Posterior vena cava (tissue), 2 donors: ENCODE measurements at regions of chr1 and their contacts with region 1.

Region 1: DNA sequence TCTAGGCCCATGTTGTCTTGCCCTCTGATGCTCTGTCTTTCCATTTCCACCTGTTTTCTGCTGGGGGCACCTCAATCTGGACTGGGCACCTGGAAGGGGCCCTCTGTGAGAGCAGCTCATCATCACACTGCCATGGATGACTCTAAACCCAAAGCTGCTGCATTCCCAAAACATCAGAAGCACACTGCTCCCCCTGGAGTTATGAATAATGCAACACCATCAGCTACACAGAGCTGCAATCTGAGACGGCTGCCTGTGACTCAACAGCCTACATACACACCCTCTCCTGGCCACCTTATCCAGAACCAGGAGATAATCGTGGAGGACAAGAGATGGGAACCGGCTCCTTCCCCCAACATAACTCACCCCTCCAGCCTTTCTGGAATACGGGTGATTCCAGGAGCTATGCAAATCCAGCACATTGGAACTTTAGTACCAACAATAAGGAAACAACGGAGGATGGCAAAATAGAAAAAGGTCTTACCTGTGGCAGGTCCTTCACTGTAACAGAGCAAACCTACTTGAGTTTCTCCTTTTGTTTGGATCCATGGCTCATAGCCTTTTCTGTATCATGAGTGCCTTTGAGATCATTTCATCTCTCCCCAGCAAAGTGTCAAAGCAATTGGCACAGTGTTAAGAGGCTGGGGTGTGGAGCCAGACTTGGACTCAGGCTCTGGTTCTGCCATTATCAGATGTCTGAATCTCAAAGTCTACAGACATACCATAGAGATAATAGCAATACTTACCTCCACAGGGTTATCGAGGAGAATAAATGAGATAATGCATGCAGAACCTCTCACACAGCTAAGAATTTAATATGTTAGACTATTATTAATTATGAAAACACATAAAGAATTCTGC is 29.3 kb downstream of the AK2 start:
- DNase-seq: peak; percentile 78

Region 2: DNA sequence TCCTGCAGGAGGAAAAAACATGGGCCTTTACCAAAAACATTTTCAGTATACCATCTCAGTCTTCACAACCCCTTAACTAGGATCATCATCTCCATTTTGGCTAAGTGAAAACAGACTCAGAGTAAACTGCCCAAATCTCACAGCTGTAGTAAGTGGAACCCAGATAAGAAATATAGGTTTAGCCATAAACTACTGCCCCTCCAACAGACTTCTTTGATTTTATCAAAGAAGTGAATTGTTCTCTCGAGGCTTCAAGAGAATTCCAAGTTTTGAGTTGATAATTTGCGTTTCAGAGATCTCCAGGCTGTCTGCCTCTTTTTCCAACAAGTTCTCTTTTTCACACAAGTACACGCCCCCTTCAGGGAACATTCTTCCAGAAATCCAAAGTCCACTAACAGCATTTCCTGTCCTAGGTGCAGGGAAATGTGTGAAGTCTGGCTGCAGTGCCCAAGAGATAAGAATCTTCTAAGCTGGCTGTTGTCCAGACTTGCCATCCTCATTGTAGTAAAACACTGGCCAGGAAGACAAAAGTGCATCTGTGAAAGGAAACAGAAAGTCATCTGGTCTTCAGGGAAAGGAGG is 73.6 kb before region 1 on chr1:
- intact Hi-C with region 1: loop called (anchors 5 kb)
- DNase-seq: no peak